PC-9 (cell line): ENCODE measurements at regions of chr7 and their contacts with region 1.

Region 1: GRCh38 chr7:106176414-106177299 is 64.5 kb upstream of the SYPL1 start:
- DNase-seq: peak in 1 of 2 experiments; percentile 88
- H3K4me3 ChIP-seq: no peak overlapping the region
- H3K27ac ChIP-seq: no peak overlapping the region
- H3K4me1 ChIP-seq: peaks cover 10% of the 10 kb centered on the region
- H3K27me3 ChIP-seq: no peaks in the 10 kb centered on the region
- CTCF ChIP-seq: peak; percentile 93

Region 2: DNA sequence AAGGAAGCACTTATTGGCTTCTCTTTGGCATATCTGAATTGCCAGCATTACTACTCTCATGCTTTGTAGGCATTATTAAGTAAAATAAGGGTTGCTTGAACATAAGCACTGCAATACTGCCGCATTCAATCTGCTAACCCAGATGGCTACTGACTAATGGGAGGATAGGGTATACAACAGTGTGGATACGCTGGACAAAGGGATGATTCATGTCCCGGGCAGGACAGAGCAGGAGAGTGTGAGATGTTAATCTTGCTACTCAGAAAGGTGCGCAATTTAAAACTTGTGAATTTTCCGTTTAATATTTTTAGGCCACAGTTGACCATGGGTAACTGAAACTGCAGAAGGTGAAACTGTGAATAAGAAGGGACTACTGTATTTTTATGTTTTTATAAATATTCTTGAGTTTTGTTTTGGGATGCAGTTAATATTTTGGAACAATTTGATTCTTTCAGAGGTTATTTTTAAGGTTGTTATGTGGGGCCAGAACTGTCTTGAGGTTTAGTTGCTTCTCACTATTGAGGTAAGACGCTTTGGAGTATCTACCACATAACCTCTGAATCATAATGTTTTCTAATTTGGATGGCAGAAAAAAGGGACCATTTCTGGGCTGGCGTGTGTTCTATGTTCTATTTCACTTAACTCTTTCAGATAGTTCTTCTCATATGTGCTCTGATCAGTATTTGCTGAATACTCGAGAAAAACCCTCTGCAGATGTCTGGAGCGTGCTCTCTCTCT is 11.1 kb after region 1 on chr7:
- CTCF ChIA-PET with region 1: interaction called, 10 read pairs
- POLR2A ChIA-PET with region 1: no interaction called
- intact Hi-C with region 1: no loop called
- DNase-seq: no peak
- H3K4me3 ChIP-seq: no peak overlapping the region
- H3K27ac ChIP-seq: no peak overlapping the region
- H3K4me1 ChIP-seq: no peaks in the 10 kb centered on the region
- H3K27me3 ChIP-seq: no peaks in the 10 kb centered on the region
- CTCF ChIP-seq: no peak

Region 3: GRCh38 chr7:106285051-106285854 is 108.6 kb after region 1 on chr7:
- CTCF ChIA-PET with region 1: no interaction called
- POLR2A ChIA-PET with region 1: interaction called, 3 read pairs
- intact Hi-C with region 1: loop called (anchors 1 kb)
- DNase-seq: peak; percentile 94 to 100
- H3K4me3 ChIP-seq: peak overlapping the region; percentile 91
- H3K27ac ChIP-seq: peak overlapping the region; percentile 99
- H3K4me1 ChIP-seq: peaks cover 45% of the 10 kb centered on the region
- H3K27me3 ChIP-seq: no peaks in the 10 kb centered on the region
- CTCF ChIP-seq: no peak

Region 4: DNA sequence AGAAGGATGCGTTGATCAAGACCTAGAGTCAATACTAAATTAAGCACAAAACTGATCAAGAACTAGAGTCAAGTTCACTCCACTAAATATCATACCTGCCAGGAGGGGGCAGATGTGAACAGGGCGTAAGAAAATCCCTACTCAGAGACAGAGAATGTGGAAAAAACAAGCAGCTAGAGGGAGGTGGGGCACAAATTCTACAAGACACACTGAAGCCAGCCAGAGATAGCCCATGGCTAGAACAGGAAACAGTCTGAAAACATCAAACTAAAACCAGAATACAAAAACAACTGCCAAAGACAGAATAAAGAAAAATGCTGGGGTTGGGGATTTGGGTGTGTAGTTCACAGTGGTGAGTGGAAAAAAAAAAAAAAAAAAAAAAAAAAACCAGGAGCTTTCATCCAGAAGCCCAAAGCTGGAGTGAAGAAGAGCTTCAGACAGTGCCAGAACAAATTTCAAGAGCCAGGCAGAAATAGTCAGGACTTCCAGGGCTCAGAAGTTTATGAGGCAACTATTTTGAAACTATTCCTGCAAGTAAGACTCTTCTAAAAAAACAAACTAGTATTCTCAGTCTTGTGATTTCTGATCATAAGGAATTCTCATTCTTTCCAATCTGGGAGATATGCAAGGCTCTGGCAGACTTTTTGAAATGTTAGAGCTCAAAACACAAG is 366.0 kb after region 1 on chr7:
- CTCF ChIA-PET with region 1: interaction called, 5 read pairs
- POLR2A ChIA-PET with region 1: no interaction called
- intact Hi-C with region 1: loop called (anchors 1 kb)
- DNase-seq: peak; percentile 61 to 70
- H3K4me3 ChIP-seq: no peak overlapping the region
- H3K27ac ChIP-seq: no peak overlapping the region
- H3K4me1 ChIP-seq: peaks cover 8% of the 10 kb centered on the region; the same call in 1 of the 2 replicates
- H3K27me3 ChIP-seq: no peaks in the 10 kb centered on the region
- CTCF ChIP-seq: peak; percentile 82

Region 5: DNA sequence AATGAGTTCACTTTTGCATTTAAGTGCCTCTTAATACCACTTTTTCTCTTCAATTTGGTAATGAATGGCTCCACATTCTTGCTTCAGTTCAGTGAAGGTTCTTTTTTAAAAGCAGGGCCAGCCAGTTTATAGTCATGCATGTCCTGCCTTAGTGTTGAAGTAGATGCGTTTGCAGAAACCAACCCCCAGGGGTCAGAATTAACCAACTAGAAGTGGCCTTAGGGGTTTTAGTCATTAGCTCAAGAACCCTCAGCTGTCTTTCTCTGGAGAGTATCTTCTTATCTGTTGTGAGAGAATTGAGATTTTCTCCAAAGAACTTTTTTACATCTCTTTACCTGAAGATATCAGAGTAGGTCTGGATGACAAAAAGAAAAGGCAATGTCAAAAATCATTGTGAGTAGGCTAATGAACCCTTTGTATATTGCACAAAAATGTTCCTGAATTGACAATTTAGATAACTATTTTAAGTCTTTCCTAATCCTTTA is 770.6 kb after region 1 on chr7:
- CTCF ChIA-PET with region 1: no interaction called
- POLR2A ChIA-PET with region 1: no interaction called
- intact Hi-C with region 1: loop called (anchors 5 kb)
- DNase-seq: peak; percentile 50 to 60
- H3K4me3 ChIP-seq: no peak overlapping the region
- H3K27ac ChIP-seq: no peak overlapping the region
- H3K4me1 ChIP-seq: no peaks in the 10 kb centered on the region
- H3K27me3 ChIP-seq: no peaks in the 10 kb centered on the region; the same call in 1 of the 2 replicates
- CTCF ChIP-seq: peak; percentile 75

Region 6: GRCh38 chr7:107725151-107725740 is 1548.6 kb after region 1 on chr7:
- CTCF ChIA-PET with region 1: no interaction called
- POLR2A ChIA-PET with region 1: no interaction called
- intact Hi-C with region 1: loop called (anchors 10 kb)
- DNase-seq: peak; percentile 45 to 73
- H3K4me3 ChIP-seq: no peak overlapping the region
- H3K27ac ChIP-seq: no peak overlapping the region
- H3K4me1 ChIP-seq: no peaks in the 10 kb centered on the region
- H3K27me3 ChIP-seq: no peaks in the 10 kb centered on the region
- CTCF ChIP-seq: peak; percentile 86